Activated CD8-positive, alpha-beta T cell treated with anti-CD3 and anti-CD28 coated beads for 36 hours (primary cell): ENCODE measurements at regions of chr22 and their contacts with region 1.

Region 1: GRCh38 chr22:20243537-20244249 is 24.4 kb downstream of the RTN4R start:
- DNase-seq: peak; percentile 77
- ATAC-seq: peak; percentile 65
- H3K4me3 Mint-ChIP-seq: peak overlapping the region; percentile 52
- H3K27ac Mint-ChIP-seq: peak overlapping the region; percentile 95
- H3K4me1 Mint-ChIP-seq: peaks cover 49% of the 10 kb centered on the region
- H3K27me3 Mint-ChIP-seq: no peaks in the 10 kb centered on the region
- CTCF ChIP-seq: no peak

Region 2: DNA sequence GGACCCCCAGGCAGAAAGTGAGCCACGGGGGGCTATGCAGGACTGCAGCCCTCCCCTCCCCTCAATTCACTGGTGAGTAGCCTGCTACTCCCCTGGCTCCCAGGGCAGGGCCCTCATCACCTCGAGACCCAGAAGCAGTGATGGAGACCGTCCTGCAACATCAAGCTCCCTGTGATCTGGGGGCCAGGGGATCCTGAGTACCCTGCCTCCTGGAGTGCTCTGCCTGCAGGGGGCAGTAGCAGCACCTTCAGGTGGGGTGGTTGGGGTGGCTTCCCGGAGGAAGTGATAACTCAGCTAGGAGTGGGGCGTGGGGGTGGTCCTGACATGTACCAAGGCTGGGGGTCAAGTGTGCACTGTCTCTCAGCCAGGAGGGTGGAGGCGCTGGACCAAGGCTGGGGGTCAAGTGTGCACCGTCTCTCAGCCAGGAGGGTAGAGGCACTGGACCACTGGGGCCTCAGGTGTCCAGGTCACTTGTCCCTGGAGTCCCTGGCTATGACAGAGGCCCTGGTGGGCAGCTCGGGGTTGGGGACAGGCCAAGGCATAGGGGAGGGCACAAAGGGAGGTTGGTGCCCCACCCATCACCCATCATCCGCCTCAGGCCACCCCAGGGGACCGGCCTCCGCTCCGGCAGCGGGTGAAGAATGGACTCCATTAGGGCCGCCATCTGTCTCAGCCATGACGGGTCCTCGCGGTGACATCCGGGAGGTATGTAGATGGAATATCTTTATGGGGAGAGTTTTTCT is 15.1 kb after region 1 on chr22:
- CTCF ChIA-PET with region 1: interaction called, 10 read pairs
- POLR2A ChIA-PET with region 1: interaction called, 3 read pairs
- intact Hi-C with region 1: no loop called
- DNase-seq: peak; percentile 47
- ATAC-seq: peak; percentile 51
- H3K4me3 Mint-ChIP-seq: no peak overlapping the region
- H3K27ac Mint-ChIP-seq: no peak overlapping the region
- H3K4me1 Mint-ChIP-seq: peaks cover 7% of the 10 kb centered on the region
- H3K27me3 Mint-ChIP-seq: no peaks in the 10 kb centered on the region
- CTCF ChIP-seq: peak; percentile 58

Region 3: GRCh38 chr22:20531315-20532201 is 287.9 kb after region 1 on chr22:
- CTCF ChIA-PET with region 1: no interaction called
- POLR2A ChIA-PET with region 1: no interaction called
- intact Hi-C with region 1: no loop called
- DNase-seq: no peak
- ATAC-seq: peak; percentile 25
- H3K4me3 Mint-ChIP-seq: no peak overlapping the region
- H3K27ac Mint-ChIP-seq: peak overlapping the region; percentile 63
- H3K4me1 Mint-ChIP-seq: peaks cover 73% of the 10 kb centered on the region
- H3K27me3 Mint-ChIP-seq: no peaks in the 10 kb centered on the region
- CTCF ChIP-seq: no peak